ENCODE measurements at regions of chr9 and their contacts with region 1.

Region 1: DNA sequence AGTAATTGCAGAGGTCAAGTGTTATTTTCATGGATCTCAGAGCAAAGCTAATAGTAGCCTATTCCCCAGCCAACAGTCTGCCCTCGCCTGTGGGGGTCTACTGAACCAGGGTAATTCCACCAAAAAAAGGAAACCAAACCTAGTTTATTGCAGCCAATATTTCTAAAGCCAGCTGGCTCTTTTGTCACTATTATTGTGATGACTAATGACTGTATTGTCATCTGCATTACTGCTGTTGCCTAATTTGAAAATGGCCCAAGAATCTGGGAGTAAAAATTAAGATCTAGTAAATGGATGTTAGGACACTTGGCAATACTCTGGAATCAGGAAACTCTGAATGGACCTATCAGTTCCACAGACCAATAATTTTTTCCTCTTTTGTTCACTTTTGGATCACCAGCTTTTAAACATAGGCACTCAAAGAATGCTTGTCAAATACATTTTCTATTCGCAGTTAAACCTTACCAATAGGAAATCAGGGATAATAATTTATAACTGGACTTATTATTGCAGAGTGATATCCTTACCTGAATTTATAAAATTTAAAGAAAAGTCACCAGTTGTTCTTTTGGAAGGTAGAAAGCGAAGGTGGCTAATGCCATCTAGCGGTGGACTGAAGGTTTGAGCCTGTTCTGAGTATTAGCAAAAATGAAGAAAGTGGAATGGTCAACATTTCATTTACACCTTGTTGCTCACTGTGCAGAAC is 69.2 kb downstream of the SYK start:
- DNase-seq: no peak
- ATAC-seq: peak; percentile 28 to 31
- H3K4me3 ChIP-seq: no peak overlapping the region
- H3K27ac ChIP-seq: no peak overlapping the region
- H3K4me1 ChIP-seq: peaks cover 9 to 23% of the 10 kb centered on the region in 2 donors
- H3K27me3 ChIP-seq: no peaks in the 10 kb centered on the region
- CTCF ChIP-seq: peak; percentile 69 to 85 (median 72)
- POLR2A ChIP-seq: no peak

Region 2: DNA sequence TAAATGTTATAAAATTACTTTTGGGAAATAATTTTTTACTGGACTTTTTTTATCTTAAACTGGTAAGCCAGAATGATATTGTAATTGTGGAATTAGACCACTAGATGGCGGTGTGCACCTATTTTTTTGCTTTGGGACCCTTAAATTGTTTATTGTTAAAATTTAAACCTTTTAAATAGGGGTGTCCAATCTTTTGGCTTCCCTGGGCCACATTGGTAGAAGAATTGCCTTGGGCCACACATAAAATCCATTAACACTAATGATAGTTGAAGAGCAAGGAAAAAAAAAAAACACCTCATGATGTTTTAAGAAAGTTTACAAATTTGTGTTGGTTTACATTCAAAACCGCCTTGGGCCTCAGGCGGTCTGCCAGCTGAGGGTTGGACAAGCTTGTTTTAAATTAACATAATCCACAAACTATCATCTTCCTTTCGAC is 1294.4 kb before region 1 on chr9:
- in situ Hi-C with region 1: loop called in 2 of 4 experiments (anchors 10 kb)
- intact Hi-C with region 1: loop called (anchors 5 kb)
- DNase-seq: no peak
- ATAC-seq: no peak
- H3K4me3 ChIP-seq: no peak overlapping the region
- H3K27ac ChIP-seq: no peak overlapping the region
- H3K4me1 ChIP-seq: no peaks in the 10 kb centered on the region
- H3K27me3 ChIP-seq: peaks cover 0 to 2% (median 0%) of the 10 kb centered on the region in 3 donors
- CTCF ChIP-seq: peak; percentile 63 to 77 (median 70)
- POLR2A ChIP-seq: no peak

Region 3: DNA sequence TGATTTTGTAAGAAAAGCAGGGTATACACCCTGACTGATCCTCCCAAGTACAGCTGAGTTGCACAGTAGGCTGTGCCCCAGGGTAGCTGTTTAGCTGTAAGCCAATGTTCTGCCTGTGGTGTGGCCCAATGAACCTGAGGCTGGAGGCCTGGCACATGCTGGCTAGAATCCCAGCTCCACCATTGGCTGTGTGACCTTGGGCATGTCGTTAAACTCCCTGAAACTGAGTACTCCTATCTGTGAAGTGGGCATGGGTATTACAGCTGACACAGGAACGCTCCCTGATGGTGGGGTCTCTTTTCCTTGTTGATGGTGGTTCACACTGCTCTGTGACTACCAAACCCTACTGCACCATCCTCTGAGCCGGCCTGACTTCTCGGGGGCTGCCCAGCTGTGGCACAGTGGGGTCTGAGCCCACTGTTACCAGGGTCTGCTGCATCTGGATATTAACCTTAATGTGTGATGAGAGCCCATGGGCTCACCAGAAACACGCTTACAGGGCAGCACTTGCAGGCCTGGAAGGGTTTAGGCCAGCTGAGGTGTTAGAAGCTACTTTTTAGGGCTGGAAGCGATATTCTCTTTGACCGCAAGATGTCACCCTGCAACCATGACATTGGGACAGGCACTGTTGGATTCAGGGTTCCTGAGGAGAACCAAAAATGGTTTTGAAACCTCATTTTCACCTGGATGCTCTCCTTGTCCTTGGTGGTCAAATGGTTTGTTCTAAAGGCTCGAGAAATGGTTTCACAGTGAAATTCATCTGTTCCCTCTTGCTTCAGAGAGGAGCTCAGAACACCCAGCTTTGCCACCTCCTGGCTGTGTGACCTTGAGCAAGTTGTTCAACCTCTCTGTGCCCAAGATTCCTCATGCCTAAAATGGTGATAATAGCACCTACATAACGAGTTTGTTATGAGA is 1272.8 kb before region 1 on chr9:
- in situ Hi-C with region 1: loop called in 2 of 4 experiments (anchors 10 kb)
- intact Hi-C with region 1: loop called (anchors 2 kb)
- DNase-seq: peak in 1 of 2 donors; percentile 52
- ATAC-seq: peak; percentile 55 to 59
- H3K4me3 ChIP-seq: no peak overlapping the region
- H3K27ac ChIP-seq: no peak overlapping the region
- H3K4me1 ChIP-seq: no peaks in the 10 kb centered on the region
- H3K27me3 ChIP-seq: no peaks in the 10 kb centered on the region
- CTCF ChIP-seq: peak; percentile 73 to 87 (median 82)
- POLR2A ChIP-seq: no peak

Region 4: DNA sequence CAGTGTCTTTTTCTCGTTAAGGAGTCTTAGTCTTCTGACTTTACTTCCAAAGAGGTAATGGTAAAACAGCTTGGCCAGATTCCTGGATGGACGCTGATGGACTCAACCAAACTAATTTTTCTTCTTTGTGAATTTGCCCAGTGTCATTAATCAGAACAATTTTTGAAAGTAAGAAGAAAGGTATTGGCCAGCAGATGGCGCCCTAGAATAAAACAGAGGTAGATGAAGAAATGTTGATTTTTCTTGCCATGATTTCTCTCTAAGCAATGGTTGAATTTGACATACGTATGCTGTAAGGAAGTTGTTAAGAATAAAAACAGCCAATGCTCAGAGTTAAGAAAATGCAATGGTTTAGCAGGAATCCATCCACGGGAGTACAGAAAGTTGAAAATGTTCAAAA is 728.2 kb before region 1 on chr9:
- in situ Hi-C with region 1: loop called (anchors 5 to 10 kb)
- intact Hi-C with region 1: loop called (anchors 1 kb)
- DNase-seq: no peak
- ATAC-seq: no peak
- H3K4me3 ChIP-seq: no peak overlapping the region
- H3K27ac ChIP-seq: no peak overlapping the region
- H3K4me1 ChIP-seq: peaks cover 6 to 7% of the 10 kb centered on the region in 2 donors
- H3K27me3 ChIP-seq: no peaks in the 10 kb centered on the region
- CTCF ChIP-seq: peak in 4 of 5 experiments; percentile 29 to 72 (median 48)
- POLR2A ChIP-seq: no peak

Measured in gastrocnemius medialis (tissue), 4 donors.